Right ventricle myocardium superior (tissue), 1 donor: ENCODE measurements at regions of chr14 and their contacts with region 1.

Region 1: DNA sequence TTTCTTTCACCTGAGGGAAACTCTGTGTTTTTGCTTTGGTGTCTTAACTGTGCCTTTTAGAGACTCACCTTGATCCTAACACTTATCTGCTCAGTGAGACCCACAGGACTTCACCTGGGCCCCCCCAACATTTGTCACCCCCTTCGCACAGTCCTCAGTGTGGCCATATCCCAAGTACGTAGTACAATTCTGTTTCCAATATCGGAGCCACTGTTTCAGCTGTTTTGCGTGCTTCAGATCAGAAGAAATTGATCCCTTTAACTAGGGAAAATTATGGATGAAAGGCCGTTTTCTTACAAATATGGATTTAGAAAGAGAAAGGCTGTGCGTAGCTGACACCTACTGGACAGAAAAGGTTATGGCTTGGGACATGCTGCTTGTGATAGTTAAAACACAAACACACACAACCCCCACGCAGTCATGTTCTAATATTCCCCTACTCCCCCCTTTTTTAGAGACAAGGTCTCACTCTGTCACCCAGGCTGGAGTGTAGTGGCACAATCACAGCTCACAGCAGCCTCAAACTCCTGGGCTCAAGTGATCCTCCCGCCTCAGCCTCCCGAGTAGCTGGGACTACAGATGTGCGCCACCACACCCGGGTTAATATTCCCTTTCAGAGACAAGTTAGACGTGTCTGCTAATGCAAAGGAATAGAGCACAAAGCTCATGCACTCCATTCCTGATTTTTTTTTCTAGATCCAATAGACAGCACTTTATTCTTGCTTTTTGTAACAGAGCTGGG is 3.6 kb upstream of the SLC7A8 start:
- DNase-seq: no peak
- ATAC-seq: peak; percentile 74

Region 2: GRCh38 chr14:23120541-23121251 is 66.4 kb before region 1 on chr14:
- intact Hi-C with region 1: loop called (anchors 2 kb)
- DNase-seq: peak; percentile 93
- ATAC-seq: peak; percentile 85

Region 3: GRCh38 chr14:23577004-23577681 is 390.1 kb after region 1 on chr14:
- intact Hi-C with region 1: no loop called
- DNase-seq: no peak
- ATAC-seq: peak; percentile 44

Region 4: DNA sequence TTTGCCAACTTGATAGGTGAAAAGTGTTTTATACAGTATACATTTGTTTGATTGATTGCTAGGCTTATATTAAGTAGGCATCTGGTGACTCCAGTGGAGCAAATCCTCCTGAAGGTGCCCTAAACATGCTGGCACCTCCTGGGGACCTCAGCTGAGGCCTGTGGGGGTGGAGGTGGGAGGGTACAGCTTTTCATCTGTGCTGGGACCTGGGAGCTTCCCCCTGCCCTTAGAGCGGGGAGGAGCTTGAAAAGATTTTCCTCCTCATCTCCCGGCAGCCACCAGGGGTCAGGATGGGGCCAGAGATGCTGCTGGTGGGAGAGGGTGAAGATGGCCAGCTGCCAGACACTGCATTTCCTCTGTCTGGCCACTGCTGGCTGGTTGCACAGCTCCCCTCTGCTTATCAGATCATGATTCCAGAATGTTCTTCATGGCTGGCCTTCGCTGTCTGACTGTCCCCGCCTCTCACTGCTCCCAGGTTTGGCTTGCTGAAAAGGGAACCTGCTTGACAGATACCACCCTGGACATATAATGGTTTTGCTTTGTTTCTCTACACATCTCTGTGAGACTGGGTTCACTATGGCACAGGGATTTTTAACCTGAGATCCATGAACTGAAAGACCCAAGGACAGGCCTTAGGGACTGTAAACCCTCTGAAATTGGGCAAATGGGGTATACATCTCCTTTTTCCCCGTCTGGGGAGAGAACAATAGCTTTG is 402.0 kb after region 1 on chr14:
- intact Hi-C with region 1: no loop called
- DNase-seq: peak; percentile 91
- ATAC-seq: peak; percentile 96